ENCODE measurements at regions of chr3 and their contacts with region 1.

Region 1: DNA sequence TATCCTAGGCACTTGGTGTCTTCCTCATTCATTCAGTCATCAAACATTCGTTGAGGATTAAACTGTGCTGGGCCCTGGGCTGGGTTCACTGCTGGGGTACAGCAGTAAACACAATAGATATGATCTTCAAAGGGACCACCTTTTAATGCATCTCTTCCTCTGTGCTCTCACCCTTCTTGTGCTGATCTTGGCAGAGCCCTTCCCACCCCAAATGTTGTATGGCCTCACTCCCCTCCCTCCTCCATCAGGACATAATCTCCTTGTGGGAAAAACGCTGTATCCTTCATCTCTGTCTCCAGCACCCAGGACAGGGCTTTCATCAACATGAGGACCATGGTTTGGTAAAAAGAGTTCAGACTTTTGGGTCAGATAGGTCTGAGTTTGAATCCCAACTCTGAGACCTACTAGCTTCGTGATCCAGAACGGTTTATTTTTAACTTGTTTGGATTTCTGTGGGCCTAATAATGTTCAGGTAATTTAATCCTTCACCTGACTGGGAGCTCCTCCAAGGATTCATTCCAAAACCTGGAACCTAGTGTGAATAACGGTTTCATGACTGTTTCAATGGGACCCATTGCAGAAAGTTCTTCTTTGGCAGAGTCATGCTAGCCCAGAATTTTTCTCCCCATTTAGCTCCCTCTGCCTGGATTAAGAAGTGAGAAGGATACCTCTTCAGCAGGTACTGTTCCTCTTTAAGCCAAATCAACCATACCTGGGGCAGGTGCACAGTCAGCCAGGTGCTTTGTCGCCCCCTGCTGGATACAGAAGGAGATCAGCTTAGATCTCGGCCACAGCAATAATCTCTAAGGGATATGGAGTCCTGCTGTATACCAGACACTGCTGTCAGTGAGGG is 5.2 kb upstream of the WNT7A start:
- DNase-seq: no peak
- ATAC-seq: peak; percentile 93
- H3K4me3 ChIP-seq: no peak overlapping the region
- H3K27ac ChIP-seq: no peak overlapping the region
- H3K4me1 ChIP-seq: no peaks in the 10 kb centered on the region
- H3K27me3 ChIP-seq: peaks cover 1 to 6% of the 10 kb centered on the region in 2 experiments
- CTCF ChIP-seq: peak; percentile 66 to 84 (median 81)
- EP300 ChIP-seq: no peak
- POLR2A ChIP-seq: no peak
- RAD21 ChIP-seq: peak; percentile 66

Region 2: GRCh38 chr3:13657660-13658435 is 227.2 kb before region 1 on chr3:
- CTCF ChIA-PET with region 1: interaction called, 57 read pairs
- POLR2A ChIA-PET with region 1: no interaction called
- RAD21 ChIA-PET with region 1: interaction called, 21 read pairs
- SMC1A ChIA-PET with region 1: interaction called, 12 read pairs
- in situ Hi-C with region 1: loop called (anchors 5 kb)
- intact Hi-C with region 1: loop called (anchors 1 kb)
- DNase-seq: no peak
- ATAC-seq: peak; percentile 96
- H3K4me3 ChIP-seq: no peak overlapping the region
- H3K27ac ChIP-seq: no peak overlapping the region
- H3K4me1 ChIP-seq: no peaks in the 10 kb centered on the region
- H3K27me3 ChIP-seq: peaks cover 2 to 4% of the 10 kb centered on the region in 2 experiments; a peak in 2 of 4 replicates
- CTCF ChIP-seq: peak; percentile 80 to 94 (median 83)
- EP300 ChIP-seq: no peak
- POLR2A ChIP-seq: no peak
- RAD21 ChIP-seq: peak; percentile 78